Activated CD8-positive, alpha-beta T cell treated with anti-CD3 and anti-CD28 coated beads, Interleukin-2, amount 10 ng/mL, durations not matched to agents 7 days and 5 days (primary cell): ENCODE measurements at regions of chr9 and their contacts with region 1.

Region 1: DNA sequence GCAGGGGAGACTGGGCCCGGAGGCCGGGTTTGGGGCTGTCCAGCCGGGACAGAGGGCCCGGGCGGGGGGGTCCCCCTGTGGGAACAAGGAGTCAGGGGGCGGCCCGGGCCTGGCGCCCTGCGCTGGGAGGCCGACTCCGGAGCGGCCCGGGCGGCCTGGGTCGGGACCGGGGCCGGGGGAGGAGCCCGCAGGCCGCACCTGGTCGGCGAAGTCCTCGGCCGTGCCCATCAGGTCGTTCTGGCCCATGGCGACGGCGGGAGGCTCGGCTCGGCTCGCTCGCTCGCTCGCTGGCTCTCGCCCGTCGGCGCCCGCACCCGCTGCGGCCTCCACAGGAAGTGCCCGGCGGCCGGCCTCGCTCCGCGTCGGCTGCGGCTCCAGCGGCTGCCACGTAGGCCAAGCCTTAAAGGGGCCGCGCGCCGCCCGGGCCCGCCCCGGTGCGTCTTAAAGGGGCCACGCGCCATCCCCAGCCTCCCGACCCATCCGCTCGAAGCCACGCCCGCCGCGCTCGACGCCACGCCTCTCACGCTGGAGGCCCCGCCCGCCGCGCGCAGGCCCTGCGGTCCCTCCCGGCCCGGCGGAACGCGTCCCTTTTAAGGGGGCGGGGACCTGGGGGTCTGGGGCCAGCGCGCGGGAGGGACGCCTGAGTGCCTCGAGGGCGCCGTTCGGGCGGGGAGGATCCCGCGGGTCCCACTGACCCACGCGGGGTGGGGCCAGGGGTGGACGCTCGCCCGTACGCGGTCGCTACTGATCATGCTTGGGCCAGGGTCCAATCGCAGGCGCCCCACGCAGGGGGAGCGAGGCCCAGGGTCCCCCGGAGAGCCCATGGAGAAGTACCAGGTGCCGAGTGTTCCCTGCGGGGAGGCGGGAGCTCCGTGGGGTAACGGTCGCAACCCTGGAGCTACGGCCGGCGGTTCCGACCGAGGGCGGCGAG is at the starts of genes STKLD1 and SURF4:
- DNase-seq: peak; percentile 96
- ATAC-seq: peak; percentile 85
- H3K4me3 Mint-ChIP-seq: peak within 1 kb of the TSS; percentile 99
- H3K27ac Mint-ChIP-seq: peak within 1 kb of the TSS; percentile 99
- H3K4me1 Mint-ChIP-seq: peaks cover 48% of the 10 kb centered on the region
- H3K27me3 Mint-ChIP-seq: peaks cover 3% of the 10 kb centered on the region
- total RNA-seq, gene STKLD1: 0.71 to 0.76 TPM
- total RNA-seq, gene SURF4: 175 to 176 TPM

Region 2: DNA sequence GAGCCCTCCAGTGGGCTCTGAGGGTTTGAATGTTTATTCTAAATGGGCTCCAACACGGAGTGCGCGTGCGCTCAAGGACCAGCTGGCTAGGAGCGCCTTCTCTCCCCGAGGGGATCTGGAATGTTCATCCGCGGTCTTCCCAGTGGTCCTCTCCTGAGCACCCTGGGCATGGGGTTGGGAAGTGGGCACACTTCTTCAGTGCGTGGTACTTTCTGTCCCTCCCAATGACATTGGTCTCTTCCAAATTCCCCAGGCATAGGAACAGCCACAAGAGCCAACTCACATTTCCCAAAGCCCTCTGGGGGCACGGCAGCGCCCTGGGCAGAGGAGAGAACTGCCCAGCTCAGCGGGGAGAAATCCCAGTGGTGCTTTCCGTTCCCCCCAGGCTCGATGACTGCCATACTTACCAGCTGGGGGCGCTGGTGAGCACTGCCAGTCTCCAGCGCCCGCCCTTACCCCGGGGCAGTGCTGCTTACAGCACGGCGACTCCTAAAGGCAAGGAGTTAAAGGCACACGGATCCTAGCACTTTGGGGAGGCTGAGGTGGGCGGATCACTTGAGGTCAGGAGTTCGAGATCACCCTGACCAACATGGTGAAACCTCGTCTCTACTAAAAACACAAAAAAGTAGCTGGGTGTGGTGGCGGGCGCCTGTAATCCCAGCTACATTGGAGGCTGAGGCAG is 137.0 kb before region 1 on chr9:
- CTCF ChIA-PET with region 1: interaction called, 10 read pairs
- POLR2A ChIA-PET with region 1: no interaction called
- DNase-seq: peak; percentile 75
- ATAC-seq: peak; percentile 86
- H3K4me3 Mint-ChIP-seq: peak overlapping the region; percentile 36
- H3K27ac Mint-ChIP-seq: no peak overlapping the region
- H3K4me1 Mint-ChIP-seq: peaks cover 7% of the 10 kb centered on the region
- H3K27me3 Mint-ChIP-seq: peaks cover 14% of the 10 kb centered on the region

Region 3: DNA sequence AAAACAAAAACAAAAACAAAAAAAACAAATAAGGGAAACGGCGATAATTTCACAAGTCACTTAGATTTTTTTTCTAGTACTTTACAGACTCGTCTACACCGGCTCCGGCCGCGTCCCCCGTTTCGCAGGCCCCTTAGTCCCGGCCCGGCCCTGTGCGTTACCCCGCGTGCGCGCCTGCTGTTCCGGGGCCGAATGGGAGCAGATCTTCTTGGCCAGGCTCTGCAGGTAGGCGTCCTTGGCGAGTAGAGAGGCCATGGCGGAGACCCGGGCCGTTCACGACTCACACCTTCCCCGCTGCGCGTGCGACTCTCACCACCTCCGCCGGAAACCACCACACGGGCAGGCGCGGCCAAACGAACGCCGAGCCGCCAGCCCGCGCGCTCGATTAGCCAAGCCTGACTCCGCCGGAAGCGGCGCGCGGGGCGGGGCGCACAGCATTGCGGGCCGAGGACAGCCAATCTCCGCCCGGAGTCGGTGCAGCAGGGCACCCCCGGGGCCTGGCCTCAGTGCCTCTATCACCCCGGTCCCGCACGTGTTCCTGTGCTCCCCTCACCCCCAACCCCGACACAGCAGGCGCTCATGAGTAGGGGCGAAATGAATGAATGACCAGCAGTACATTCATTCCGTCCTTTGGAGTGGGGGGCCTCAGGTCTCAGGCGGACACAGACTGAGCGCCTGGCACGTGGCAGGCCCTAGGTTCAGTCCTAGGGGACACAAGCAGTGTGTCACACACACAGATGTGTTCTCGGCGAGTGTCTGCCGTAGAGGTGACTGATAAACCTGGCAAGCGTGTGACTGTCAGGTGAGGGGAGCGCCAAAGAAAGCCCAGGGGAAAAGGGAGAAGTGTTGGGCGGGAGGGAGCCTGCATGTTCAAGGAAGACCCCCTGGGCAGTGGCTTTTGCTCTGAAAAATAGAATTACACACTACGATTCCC is 39.8 kb before region 1 on chr9 and contains the start of gene SURF6:
- CTCF ChIA-PET with region 1: interaction called, 21 read pairs
- POLR2A ChIA-PET with region 1: interaction called, 7 read pairs
- DNase-seq: peak; percentile 94
- ATAC-seq: peak; percentile 91
- H3K4me3 Mint-ChIP-seq: peak within 1 kb of the TSS; percentile 97
- H3K27ac Mint-ChIP-seq: peak within 1 kb of the TSS; percentile 96
- H3K4me1 Mint-ChIP-seq: peaks cover 61% of the 10 kb centered on the region
- H3K27me3 Mint-ChIP-seq: no peaks in the 10 kb centered on the region
- total RNA-seq, gene SURF6: 20.1 to 21.4 TPM

Region 4: GRCh38 chr9:133342069-133342406 is 34.0 kb before region 1 on chr9:
- CTCF ChIA-PET with region 1: interaction called, 21 read pairs
- POLR2A ChIA-PET with region 1: interaction called, 192 read pairs
- DNase-seq: no peak
- ATAC-seq: no peak
- H3K4me3 Mint-ChIP-seq: no peak overlapping the region
- H3K27ac Mint-ChIP-seq: peak overlapping the region; percentile 78
- H3K4me1 Mint-ChIP-seq: peaks cover 53% of the 10 kb centered on the region
- H3K27me3 Mint-ChIP-seq: no peaks in the 10 kb centered on the region

Region 5: DNA sequence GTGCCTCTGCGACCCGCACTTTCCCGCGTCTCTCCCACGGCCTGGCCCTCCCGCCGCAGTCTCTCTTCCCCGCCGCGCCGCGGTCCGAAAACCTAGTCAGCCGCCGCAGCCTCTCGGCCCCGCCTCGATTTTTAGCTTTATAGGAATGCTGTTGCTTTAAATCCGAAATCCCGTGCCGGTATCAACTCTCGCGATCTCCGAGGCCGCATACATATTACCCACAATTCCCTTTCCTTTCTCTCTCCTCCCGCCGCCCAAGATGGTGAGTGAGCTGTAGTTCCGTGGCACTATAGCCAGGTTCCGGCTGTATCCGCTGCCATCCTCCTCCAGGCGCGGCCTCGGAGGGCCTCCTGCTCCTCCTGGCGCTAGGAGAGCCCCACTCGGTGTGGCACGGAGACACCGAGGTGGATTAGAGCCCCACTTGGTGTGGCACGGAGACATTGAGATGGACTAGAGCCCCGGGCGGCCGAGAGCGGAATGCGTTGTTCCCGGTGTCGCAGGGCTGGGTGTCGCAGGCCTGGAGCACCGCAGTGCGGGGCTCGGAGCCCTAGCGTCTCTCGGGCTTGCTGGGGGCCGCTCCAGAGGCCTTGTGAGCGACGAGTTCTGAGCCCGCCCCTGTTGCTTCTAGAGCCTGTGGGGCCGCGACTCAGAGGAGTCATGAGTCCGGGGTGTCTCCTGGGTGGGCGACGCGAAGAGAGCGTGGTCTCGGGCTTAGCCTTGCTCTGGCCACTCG is 27.8 kb before region 1 on chr9 and contains the starts of genes MED22 and RPL7A:
- CTCF ChIA-PET with region 1: interaction called, 29 read pairs
- POLR2A ChIA-PET with region 1: interaction called, 192 read pairs
- DNase-seq: peak; percentile 96
- ATAC-seq: peak; percentile 84
- H3K4me3 Mint-ChIP-seq: peak within 1 kb of the TSS; percentile 99
- H3K27ac Mint-ChIP-seq: peak within 1 kb of the TSS; percentile 98
- H3K4me1 Mint-ChIP-seq: peaks cover 59% of the 10 kb centered on the region
- H3K27me3 Mint-ChIP-seq: no peaks in the 10 kb centered on the region
- total RNA-seq, gene MED22: 29.1 to 29.6 TPM
- total RNA-seq, gene RPL7A: 1,894 to 1,933 TPM

Region 6: GRCh38 chr9:133356391-133357091 is 19.4 kb before region 1 on chr9 and contains the starts of genes SURF1 and SURF2:
- CTCF ChIA-PET with region 1: interaction called, 54 read pairs
- POLR2A ChIA-PET with region 1: interaction called, 192 read pairs
- DNase-seq: peak; percentile 94
- ATAC-seq: peak; percentile 89
- H3K4me3 Mint-ChIP-seq: peak within 1 kb of the TSS; percentile 86
- H3K27ac Mint-ChIP-seq: peak within 1 kb of the TSS; percentile 90
- H3K4me1 Mint-ChIP-seq: peaks cover 56% of the 10 kb centered on the region
- H3K27me3 Mint-ChIP-seq: no peaks in the 10 kb centered on the region
- total RNA-seq, gene SURF1: 37.4 to 39.1 TPM
- total RNA-seq, gene SURF2: 18.4 to 20.7 TPM

Region 7: GRCh38 chr9:133362359-133363044 is 13.5 kb before region 1 on chr9:
- CTCF ChIA-PET with region 1: interaction called, 54 read pairs
- POLR2A ChIA-PET with region 1: interaction called, 160 read pairs
- DNase-seq: no peak
- ATAC-seq: no peak
- H3K4me3 Mint-ChIP-seq: no peak overlapping the region
- H3K27ac Mint-ChIP-seq: peak overlapping the region; percentile 82
- H3K4me1 Mint-ChIP-seq: peaks cover 43% of the 10 kb centered on the region
- H3K27me3 Mint-ChIP-seq: no peaks in the 10 kb centered on the region